Endothelial cell of umbilical vein (primary cell): ENCODE measurements at regions of chr2 and their contacts with region 1.

Region 1: GRCh38 chr2:25991965-25992364 is 9.7 kb upstream of the KIF3C start:
- DNase-seq: no peak
- H3K4me3 ChIP-seq: no peak overlapping the region
- H3K27ac ChIP-seq: no peak overlapping the region
- H3K4me1 ChIP-seq: peaks cover 3% of the 10 kb centered on the region
- H3K27me3 ChIP-seq: no peaks in the 10 kb centered on the region
- CTCF ChIP-seq: no peak
- POLR2A ChIP-seq: no peak

Region 2: DNA sequence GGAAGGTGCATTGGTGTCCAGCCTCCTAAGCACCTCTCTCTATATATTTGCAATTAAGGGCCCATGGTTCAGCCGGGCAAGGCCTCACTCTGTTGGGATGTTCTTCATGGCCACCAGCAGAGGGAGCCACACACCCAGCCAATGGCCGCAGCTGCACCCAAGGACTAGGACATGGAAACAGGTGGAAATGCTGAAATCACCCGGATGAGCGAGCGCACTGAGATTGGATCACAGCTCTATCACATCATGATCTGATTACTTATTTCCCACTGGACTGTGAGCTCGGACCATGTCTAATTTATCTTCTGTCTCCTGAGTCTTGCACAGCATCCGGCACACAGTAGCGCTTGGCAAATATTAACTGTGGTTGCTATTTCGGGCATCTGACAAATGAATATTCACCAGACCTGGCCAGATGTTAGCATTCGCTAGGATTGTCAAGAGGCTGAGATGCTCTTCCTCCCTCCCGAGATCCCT is 40.9 kb before region 1 on chr2:
- CTCF ChIA-PET with region 1: interaction called, 24 read pairs
- POLR2A ChIA-PET with region 1: no interaction called
- dilution Hi-C with region 1: no loop called
- intact Hi-C with region 1: loop called (anchors 1 kb)
- DNase-seq: peak; percentile 86
- H3K4me3 ChIP-seq: no peak overlapping the region
- H3K27ac ChIP-seq: no peak overlapping the region
- H3K4me1 ChIP-seq: no peaks in the 10 kb centered on the region
- H3K27me3 ChIP-seq: no peaks in the 10 kb centered on the region
- CTCF ChIP-seq: peak; percentile 88 to 95
- POLR2A ChIP-seq: no peak

Region 3: DNA sequence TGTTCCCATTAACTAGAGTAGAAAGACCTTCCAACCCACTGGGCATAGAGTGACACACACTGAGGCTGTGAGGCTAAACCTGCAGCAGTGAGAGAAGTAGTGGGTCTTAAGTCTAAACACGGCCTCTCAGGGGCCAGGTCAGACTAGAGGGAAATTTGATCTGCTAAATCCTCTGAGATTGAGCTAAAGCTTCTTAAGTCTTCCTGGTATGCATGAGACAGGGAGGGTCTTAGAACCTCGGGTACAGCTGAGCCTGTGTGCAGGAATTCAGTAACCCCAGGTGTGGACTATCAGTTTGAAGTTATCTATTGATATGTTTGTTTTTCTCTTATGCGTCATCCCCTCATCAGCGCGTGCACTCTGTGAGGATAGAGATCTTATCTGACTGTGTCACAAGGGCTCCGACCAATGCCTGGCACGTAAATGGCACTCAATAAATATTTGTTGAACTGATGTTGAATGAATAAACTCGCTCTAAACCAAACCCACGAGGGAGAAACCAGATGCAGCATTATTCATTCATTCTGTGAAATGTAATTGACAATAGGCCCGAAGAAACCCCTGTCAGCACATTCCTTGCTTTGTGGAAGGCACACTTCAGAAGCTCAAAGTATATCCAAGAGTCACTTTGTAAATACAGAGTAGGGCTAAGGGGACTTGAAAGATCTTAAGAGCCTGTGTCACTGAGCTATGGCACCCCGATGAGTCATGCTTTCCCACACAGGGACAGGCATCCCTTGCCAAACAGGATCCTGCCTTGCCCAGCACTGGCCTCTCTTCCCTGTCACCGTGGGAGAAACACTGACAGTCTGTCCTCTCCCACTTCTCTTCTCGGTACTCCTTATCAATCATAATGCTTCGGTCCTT is 20.3 kb after region 1 on chr2:
- CTCF ChIA-PET with region 1: interaction called, 14 read pairs
- POLR2A ChIA-PET with region 1: no interaction called
- dilution Hi-C with region 1: no loop called
- intact Hi-C with region 1: no loop called
- DNase-seq: peak; percentile 39
- H3K4me3 ChIP-seq: no peak overlapping the region
- H3K27ac ChIP-seq: no peak overlapping the region
- H3K4me1 ChIP-seq: peaks cover 20% of the 10 kb centered on the region
- H3K27me3 ChIP-seq: no peaks in the 10 kb centered on the region
- CTCF ChIP-seq: no peak
- POLR2A ChIP-seq: no peak

Region 4: GRCh38 chr2:26033818-26034636 is 42.1 kb after region 1 on chr2 and contains the start of gene RAB10:
- CTCF ChIA-PET with region 1: interaction called, 36 read pairs
- POLR2A ChIA-PET with region 1: interaction called, 3 read pairs
- dilution Hi-C with region 1: no loop called
- intact Hi-C with region 1: loop called (anchors 1 kb)
- DNase-seq: peak; percentile 100
- H3K4me3 ChIP-seq: peak within 1 kb of the TSS; percentile 90 to 97 (median 92)
- H3K27ac ChIP-seq: peak within 1 kb of the TSS; percentile 72
- H3K4me1 ChIP-seq: peaks cover 11% of the 10 kb centered on the region
- H3K27me3 ChIP-seq: no peaks in the 10 kb centered on the region
- CTCF ChIP-seq: no peak
- POLR2A ChIP-seq: peak; percentile 94
- total RNA-seq, gene RAB10: 104 and 105 TPM in 2 replicates

Region 5: GRCh38 chr2:26088032-26088643 is 96.2 kb after region 1 on chr2:
- CTCF ChIA-PET with region 1: interaction called, 47 read pairs
- POLR2A ChIA-PET with region 1: no interaction called
- dilution Hi-C with region 1: no loop called
- intact Hi-C with region 1: loop called (anchors 5 kb)
- DNase-seq: peak; percentile 37
- H3K4me3 ChIP-seq: no peak overlapping the region
- H3K27ac ChIP-seq: no peak overlapping the region
- H3K4me1 ChIP-seq: no peaks in the 10 kb centered on the region
- H3K27me3 ChIP-seq: no peaks in the 10 kb centered on the region
- CTCF ChIP-seq: peak; percentile 56 to 63
- POLR2A ChIP-seq: no peak

Region 6: DNA sequence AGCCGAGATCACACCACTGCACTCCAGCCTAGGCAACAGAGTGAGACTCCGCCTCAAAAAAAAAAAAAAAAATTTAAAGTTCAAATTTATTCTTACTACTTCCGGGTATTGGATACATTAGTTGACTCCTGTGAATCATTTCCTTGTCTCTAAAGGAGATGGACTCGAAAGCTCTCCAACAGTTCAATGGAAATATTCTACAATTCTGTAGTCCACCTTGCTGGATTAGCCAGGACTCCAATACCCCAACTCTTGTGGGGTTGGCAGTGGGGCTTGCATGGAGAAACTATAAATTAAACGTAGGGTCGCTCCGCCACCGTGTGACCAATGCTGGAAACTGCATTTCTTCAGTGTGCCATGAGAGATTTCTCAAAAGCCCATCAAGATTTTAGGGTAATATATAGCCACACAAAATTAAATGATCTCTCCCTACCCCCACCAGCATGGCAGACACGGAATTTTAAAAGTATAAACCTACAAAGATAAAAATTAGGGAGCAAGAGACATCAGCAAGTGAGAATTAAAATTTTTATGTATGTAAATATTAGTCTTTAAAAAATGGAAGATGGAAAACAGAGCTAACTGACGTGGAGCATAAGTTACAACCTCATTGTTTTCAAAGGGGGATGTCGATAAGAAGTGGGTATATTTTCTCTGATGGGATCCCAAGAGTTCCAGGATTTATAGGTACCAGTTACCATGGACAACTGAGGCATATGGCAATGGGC is 153.2 kb after region 1 on chr2:
- CTCF ChIA-PET with region 1: interaction called, 35 read pairs
- POLR2A ChIA-PET with region 1: no interaction called
- dilution Hi-C with region 1: no loop called
- intact Hi-C with region 1: loop called (anchors 1 kb)
- DNase-seq: peak; percentile 74
- H3K4me3 ChIP-seq: no peak overlapping the region
- H3K27ac ChIP-seq: no peak overlapping the region
- H3K4me1 ChIP-seq: peaks cover 11% of the 10 kb centered on the region
- H3K27me3 ChIP-seq: peaks cover 0 to 2% of the 10 kb centered on the region in 2 experiments
- CTCF ChIP-seq: peak; percentile 59 to 61
- POLR2A ChIP-seq: no peak

Region 7: DNA sequence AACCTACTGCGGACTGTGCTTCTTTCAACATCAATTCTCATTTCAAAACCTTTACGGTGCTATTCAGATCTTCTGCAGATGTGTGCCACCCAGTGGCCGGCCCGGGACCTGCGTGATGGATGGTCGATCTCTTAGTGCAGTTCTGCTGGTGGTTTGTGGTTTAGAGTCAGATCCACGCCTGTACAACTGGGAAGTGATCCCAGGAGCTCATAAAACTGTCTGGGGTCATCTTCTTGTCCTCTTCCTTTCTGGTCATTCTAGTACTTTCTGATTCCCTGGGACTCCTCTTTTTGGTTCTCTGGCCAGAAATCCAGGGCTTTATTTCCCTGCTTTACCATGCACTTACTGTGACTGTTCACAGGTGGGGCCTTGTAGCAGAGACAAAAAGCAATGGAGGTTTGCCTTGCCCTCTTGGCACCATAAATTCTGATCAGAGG is 338.2 kb after region 1 on chr2:
- CTCF ChIA-PET with region 1: interaction called, 4 read pairs
- POLR2A ChIA-PET with region 1: no interaction called
- dilution Hi-C with region 1: no loop called
- intact Hi-C with region 1: loop called (anchors 1 kb)
- DNase-seq: peak; percentile 81
- H3K4me3 ChIP-seq: no peak overlapping the region
- H3K27ac ChIP-seq: no peak overlapping the region
- H3K4me1 ChIP-seq: no peaks in the 10 kb centered on the region
- H3K27me3 ChIP-seq: peaks cover 4 to 9% of the 10 kb centered on the region in 2 experiments
- CTCF ChIP-seq: peak; percentile 83 to 90
- POLR2A ChIP-seq: no peak